Common myeloid progenitor, CD34-positive (primary cell): ENCODE measurements at regions of chr2 and their contacts with region 1.

Region 1: GRCh38 chr2:27683390-27684071 is 19.8 kb downstream of the SLC4A1AP start:
- DNase-seq: peak; percentile 95 to 99 (median 96)
- H3K4me3 ChIP-seq: no peak overlapping the region
- H3K27ac ChIP-seq: no peak overlapping the region
- H3K4me1 ChIP-seq: peaks cover 0 to 5% (median 2%) of the 10 kb centered on the region in 4 experiments
- H3K27me3 ChIP-seq: no peaks in the 10 kb centered on the region

Region 2: DNA sequence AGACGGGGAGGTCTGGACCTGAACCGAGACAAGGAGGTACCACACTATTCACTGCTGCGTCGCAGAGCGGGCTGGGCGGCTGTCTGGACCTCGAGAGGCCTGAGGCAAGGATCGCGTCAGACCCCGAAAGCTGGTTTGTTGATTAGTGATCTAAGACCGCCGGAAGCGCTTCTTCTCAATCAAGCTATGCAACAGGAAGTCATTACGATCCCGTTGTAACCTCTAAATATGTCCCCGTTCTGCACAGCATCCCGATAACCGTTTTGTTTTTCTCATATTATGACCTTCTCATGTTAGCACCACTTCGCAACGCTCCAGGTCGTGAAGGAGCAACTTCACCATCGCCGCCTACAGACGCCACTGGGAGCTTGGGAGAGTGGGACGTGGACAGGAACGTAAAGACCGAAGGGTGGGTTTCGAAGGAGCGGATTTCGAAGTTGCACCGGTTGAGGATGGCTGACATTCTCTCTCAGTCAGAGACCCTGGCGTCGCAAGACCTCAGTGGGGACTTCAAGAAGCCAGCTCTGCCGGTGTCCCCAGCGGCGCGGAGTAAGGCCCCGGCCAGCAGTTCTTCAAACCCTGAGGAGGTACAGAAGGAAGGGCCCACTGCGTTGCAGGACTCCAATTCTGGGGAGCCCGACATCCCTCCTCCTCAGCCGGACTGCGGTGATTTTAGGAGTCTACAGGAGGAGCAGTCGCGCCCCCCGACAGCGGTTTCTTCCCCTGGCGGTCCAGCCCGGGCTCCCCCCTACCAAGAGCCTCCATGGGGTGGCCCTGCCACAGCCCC is 19.9 kb before region 1 on chr2 and contains the starts of genes SLC4A1AP and SUPT7L:
- CTCF ChIA-PET with region 1: interaction called, 57 read pairs
- POLR2A ChIA-PET with region 1: interaction called, 4 read pairs
- DNase-seq: peak; percentile 89 to 93 (median 90)
- H3K4me3 ChIP-seq: peak within 1 kb of the TSS; percentile 82 to 99 (median 92)
- H3K27ac ChIP-seq: peak within 1 kb of the TSS; percentile 94 to 96
- H3K4me1 ChIP-seq: peaks cover 12 to 35% (median 25%) of the 10 kb centered on the region in 4 experiments
- H3K27me3 ChIP-seq: no peaks in the 10 kb centered on the region

Region 3: DNA sequence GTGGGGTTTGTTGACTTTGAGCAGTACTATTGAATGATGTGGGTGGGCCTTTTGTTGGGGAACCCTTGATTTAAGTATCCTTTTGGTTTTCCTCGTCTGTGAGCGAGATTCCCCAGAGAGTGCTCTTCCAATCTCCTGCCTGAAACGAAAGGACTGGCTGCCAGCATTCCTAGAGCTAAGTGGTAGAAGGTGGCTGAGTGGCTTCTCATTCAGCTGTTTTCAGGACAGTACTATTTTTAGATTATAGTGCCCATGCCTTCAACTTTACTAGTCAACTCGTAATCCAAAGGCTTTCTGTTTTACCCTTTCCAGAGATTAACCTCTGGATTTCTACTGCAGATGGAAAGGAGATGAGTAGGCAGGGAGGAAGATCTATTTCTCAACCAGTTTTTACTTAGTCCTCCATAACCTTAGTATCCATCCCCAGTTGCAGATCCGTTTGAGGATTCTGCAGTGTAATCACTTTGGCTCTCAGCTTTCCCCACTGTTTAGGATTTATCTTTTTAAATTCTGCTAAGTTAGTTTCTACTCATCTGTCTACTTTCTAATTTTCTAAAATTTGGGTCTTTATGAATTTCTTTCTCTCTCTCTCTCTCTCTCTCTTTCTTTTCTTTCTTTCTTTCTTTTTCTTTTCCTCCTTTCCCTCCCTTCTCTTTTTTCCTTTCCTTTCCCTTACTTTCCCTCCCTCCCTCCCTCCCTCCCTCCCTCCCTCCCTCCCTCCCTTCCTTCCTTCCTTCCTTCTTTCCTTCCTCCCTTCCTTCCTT is 10.6 kb before region 1 on chr2:
- CTCF ChIA-PET with region 1: interaction called, 57 read pairs
- POLR2A ChIA-PET with region 1: interaction called, 4 read pairs
- DNase-seq: no peak
- H3K4me3 ChIP-seq: no peak overlapping the region
- H3K27ac ChIP-seq: no peak overlapping the region
- H3K4me1 ChIP-seq: no peaks in the 10 kb centered on the region
- H3K27me3 ChIP-seq: no peaks in the 10 kb centered on the region